Activated CD4-positive, alpha-beta T cell treated with anti-CD3 and anti-CD28 coated beads for 36 hours (primary cell): ENCODE measurements at regions of chr12 and their contacts with region 1.

Region 1: DNA sequence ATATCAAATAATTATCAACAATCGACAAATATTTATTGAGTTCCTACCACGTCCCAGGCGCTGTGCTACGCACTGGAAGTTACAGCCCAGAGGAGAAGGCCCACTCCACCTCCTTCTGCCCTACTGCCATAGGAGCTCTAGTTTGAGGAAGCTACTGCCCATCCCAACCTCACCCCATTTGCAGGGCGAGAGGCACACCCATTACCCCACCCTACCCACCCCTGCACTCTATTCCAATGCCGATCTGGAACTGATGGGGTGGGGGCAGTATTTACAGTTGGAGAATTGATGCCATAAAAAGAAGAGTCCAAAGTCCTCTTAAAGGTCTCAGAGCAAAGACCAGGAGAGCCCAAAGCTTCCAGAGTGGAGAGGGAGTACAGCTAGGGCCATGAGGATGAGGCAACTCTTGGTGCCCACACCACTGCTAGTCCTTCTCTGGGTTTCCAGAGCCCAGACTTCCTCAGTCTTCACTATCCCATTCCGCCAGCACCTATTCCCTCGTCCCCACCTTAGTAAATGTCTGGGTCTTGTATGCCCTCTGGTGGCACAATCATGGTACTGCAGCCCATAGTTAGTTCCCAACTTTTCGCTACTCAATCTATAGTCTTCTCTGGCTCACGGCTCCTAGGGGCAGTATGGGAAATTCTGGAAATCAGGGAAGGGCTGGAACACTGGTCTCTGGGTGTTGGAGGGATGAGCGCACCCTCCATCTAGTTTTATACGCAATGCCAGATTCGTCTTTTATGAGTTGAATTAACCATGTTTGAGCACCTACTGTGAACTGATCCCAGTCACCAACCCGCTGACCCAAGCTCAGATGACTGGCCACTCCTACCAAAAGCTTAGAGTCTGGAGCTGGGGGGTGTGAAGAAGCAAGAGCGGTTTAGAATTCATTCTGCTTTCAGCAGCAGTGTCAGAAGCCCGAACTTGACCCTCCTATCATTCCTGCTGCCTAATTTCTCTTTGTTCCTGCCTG is 6.9 kb upstream of the ADCY6 start:
- DNase-seq: peak; percentile 74
- ATAC-seq: peak; percentile 84
- H3K4me3 Mint-ChIP-seq: no peak overlapping the region
- H3K27ac Mint-ChIP-seq: no peak overlapping the region
- H3K4me1 Mint-ChIP-seq: peaks cover 2% of the 10 kb centered on the region
- H3K27me3 Mint-ChIP-seq: peaks cover 3% of the 10 kb centered on the region

Region 2: DNA sequence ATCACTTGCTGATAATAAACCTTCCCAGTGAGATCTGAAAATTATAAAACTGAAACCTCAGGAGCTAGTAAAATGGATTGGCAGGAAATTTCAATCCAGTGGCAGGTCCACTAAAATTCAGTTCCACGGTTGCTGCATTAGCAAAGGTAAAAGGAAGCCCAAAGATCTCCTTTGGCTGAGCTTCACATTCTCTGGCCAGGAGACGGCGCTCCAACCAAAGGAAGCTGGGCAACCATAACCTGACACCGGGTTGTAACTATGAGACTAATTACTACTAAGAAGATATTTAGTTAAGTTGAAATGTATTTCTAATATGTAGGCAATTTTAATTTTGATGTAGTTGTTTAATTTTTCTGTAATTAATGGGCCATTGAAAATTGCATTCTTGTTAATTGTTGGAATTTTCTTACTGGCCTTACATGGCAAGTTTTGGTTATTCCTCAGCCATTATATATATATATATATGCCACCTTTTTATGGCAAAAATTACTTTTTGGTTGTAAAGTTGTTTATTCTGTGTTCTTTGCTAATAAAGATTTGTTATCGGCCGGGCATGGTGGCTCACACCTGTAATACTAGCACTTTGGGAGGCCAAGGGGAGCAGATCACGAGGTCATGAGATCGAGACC is 253.4 kb before region 1 on chr12:
- CTCF ChIA-PET with region 1: interaction called, 7 read pairs
- POLR2A ChIA-PET with region 1: no interaction called
- intact Hi-C with region 1: loop called (anchors 1 kb)
- DNase-seq: peak; percentile 80
- ATAC-seq: peak; percentile 55
- H3K4me3 Mint-ChIP-seq: no peak overlapping the region
- H3K27ac Mint-ChIP-seq: no peak overlapping the region
- H3K4me1 Mint-ChIP-seq: peaks cover 11% of the 10 kb centered on the region
- H3K27me3 Mint-ChIP-seq: no peaks in the 10 kb centered on the region

Region 3: DNA sequence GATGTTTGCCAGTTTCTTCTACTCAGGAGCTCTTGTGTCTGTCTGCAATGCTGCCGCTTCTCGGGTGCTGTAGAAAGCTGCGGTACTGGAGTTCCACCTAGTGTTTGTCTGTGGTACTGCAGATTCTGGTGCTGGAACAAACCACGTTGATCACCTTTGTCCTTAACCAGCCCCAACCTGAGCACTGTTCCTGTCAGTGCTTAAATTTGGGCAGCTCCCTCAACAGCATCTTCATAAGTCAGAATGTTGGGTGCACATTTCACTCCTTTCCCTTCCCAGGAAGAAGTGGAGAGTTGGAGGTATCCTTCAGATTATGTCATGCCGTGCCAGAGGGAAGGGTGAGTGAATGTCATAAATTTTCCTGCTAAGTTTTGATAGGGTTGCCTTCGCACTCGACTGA is 177.2 kb before region 1 on chr12:
- CTCF ChIA-PET with region 1: interaction called, 11 read pairs
- POLR2A ChIA-PET with region 1: no interaction called
- intact Hi-C with region 1: loop called in 1 of 2 experiments (anchors 10 kb)
- DNase-seq: peak; percentile 85
- ATAC-seq: peak; percentile 89
- H3K4me3 Mint-ChIP-seq: no peak overlapping the region
- H3K27ac Mint-ChIP-seq: no peak overlapping the region
- H3K4me1 Mint-ChIP-seq: no peaks in the 10 kb centered on the region
- H3K27me3 Mint-ChIP-seq: peaks cover 30% of the 10 kb centered on the region

Region 4: DNA sequence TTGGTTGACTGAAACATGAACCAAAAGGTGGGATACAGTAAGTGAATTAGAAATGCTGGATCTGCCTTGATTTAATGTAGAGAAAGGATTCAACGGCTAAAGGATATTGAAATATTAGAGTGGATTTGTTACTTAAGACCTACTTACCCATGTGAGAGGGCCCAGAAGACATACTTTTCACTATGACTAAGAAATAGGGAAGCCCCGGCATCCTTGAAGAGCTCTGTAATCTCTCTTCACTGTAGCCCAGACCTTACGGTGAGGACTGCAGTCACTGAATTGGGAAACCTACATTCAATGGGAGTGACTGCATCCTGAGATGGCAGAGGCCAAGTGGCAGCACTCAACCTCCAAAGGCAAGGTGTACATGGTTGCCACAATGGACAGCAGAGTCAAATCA is 166.2 kb before region 1 on chr12:
- CTCF ChIA-PET with region 1: no interaction called
- POLR2A ChIA-PET with region 1: no interaction called
- intact Hi-C with region 1: loop called in 1 of 2 experiments (anchors 10 kb)
- DNase-seq: no peak
- ATAC-seq: no peak
- H3K4me3 Mint-ChIP-seq: no peak overlapping the region
- H3K27ac Mint-ChIP-seq: no peak overlapping the region
- H3K4me1 Mint-ChIP-seq: no peaks in the 10 kb centered on the region
- H3K27me3 Mint-ChIP-seq: peaks cover 10% of the 10 kb centered on the region

Region 5: DNA sequence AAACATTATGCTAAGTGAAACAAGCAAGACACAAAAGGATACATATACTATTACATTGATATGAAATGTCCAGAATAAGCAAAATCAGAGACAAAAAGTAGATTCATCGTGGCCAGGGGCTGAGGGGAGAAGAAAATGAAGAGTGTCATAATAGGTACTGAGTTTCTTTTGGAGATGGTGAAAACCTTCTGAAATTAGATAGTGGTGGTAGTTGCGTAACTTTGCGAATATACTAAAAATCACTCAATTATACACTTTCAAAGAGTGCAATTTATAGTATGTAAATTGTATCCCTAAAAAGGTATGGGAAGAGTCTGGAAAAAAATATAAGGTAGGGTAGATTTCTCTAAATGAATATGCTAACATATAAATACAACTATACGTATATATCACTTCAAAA is 135.9 kb before region 1 on chr12:
- CTCF ChIA-PET with region 1: no interaction called
- POLR2A ChIA-PET with region 1: no interaction called
- intact Hi-C with region 1: no loop called
- DNase-seq: no peak
- ATAC-seq: no peak
- H3K4me3 Mint-ChIP-seq: no peak overlapping the region
- H3K27ac Mint-ChIP-seq: no peak overlapping the region
- H3K4me1 Mint-ChIP-seq: no peaks in the 10 kb centered on the region
- H3K27me3 Mint-ChIP-seq: no peaks in the 10 kb centered on the region

Region 6: GRCh38 chr12:48681738-48682532 is 113.8 kb before region 1 on chr12 and contains the start of gene KANSL2:
- CTCF ChIA-PET with region 1: interaction called, 5 read pairs
- POLR2A ChIA-PET with region 1: no interaction called
- intact Hi-C with region 1: loop called in 1 of 2 experiments (anchors 5 kb)
- DNase-seq: peak; percentile 99
- ATAC-seq: peak; percentile 96
- H3K4me3 Mint-ChIP-seq: peak within 1 kb of the TSS; percentile 87
- H3K27ac Mint-ChIP-seq: peak within 1 kb of the TSS; percentile 91
- H3K4me1 Mint-ChIP-seq: peaks cover 41% of the 10 kb centered on the region
- H3K27me3 Mint-ChIP-seq: no peaks in the 10 kb centered on the region
- total RNA-seq, gene KANSL2: 44.0 to 59.8 TPM

Region 7: GRCh38 chr12:48758221-48758620 is 37.5 kb before region 1 on chr12:
- CTCF ChIA-PET with region 1: interaction called, 116 read pairs
- POLR2A ChIA-PET with region 1: interaction called, 7 read pairs
- intact Hi-C with region 1: loop called (anchors 1 kb)
- DNase-seq: no peak
- ATAC-seq: no peak
- H3K4me3 Mint-ChIP-seq: no peak overlapping the region
- H3K27ac Mint-ChIP-seq: no peak overlapping the region
- H3K4me1 Mint-ChIP-seq: peaks cover 2% of the 10 kb centered on the region
- H3K27me3 Mint-ChIP-seq: peaks cover 2% of the 10 kb centered on the region